Upper lobe of right lung (tissue), 1 donor: ENCODE measurements at regions of chr2 and their contacts with region 1.

Region 1: GRCh38 chr2:41869542-41870264 is 178.1 kb upstream of the PKDCC start:
- DNase-seq: peak; percentile 84
- ATAC-seq: peak; percentile 92
- H3K4me3 ChIP-seq: no peak overlapping the region
- H3K27ac ChIP-seq: no peak overlapping the region
- H3K4me1 ChIP-seq: no peaks in the 10 kb centered on the region
- H3K27me3 ChIP-seq: no peaks in the 10 kb centered on the region
- CTCF ChIP-seq: peak; percentile 88

Region 2: GRCh38 chr2:41933585-41934320 is 64.0 kb after region 1 on chr2:
- intact Hi-C with region 1: no loop called
- DNase-seq: no peak
- ATAC-seq: peak; percentile 33
- H3K4me3 ChIP-seq: no peak overlapping the region
- H3K27ac ChIP-seq: no peak overlapping the region
- H3K4me1 ChIP-seq: peaks cover 8% of the 10 kb centered on the region
- H3K27me3 ChIP-seq: no peaks in the 10 kb centered on the region
- CTCF ChIP-seq: no peak

Region 3: GRCh38 chr2:42086500-42086953 is 216.8 kb after region 1 on chr2:
- intact Hi-C with region 1: loop called (anchors 5 kb)
- DNase-seq: no peak
- ATAC-seq: peak; percentile 80
- H3K4me3 ChIP-seq: no peak overlapping the region
- H3K27ac ChIP-seq: no peak overlapping the region
- H3K4me1 ChIP-seq: peaks cover 27% of the 10 kb centered on the region
- H3K27me3 ChIP-seq: no peaks in the 10 kb centered on the region
- CTCF ChIP-seq: peak; percentile 76